ENCODE measurements at regions of chr12 and their contacts with region 1.

Region 1: GRCh38 chr12:6914246-6914946 is at the start of gene ENO2:
- DNase-seq: peak; percentile 92 to 95
- ATAC-seq: peak; percentile 94
- H3K4me3 ChIP-seq: peak within 1 kb of the TSS; percentile 61 to 89
- H3K27ac ChIP-seq: peak within 1 kb of the TSS; percentile 31 to 86
- H3K4me1 ChIP-seq: no peaks in the 10 kb centered on the region
- H3K27me3 ChIP-seq: no peaks in the 10 kb centered on the region
- total RNA-seq, gene ENO2: 59.0 to 79.5 TPM

Region 2: GRCh38 chr12:6873094-6874014 is 41.0 kb before region 1 on chr12 and contains the start of gene SPSB2:
- intact Hi-C with region 1: loop called in 1 of 2 experiments (anchors 2 kb)
- DNase-seq: peak; percentile 100
- ATAC-seq: peak; percentile 98
- H3K4me3 ChIP-seq: peak within 1 kb of the TSS; percentile 71 to 80
- H3K27ac ChIP-seq: peak within 1 kb of the TSS in 1 of 2 donors; percentile 71
- H3K4me1 ChIP-seq: peaks cover 0 to 1% of the 10 kb centered on the region in 2 donors
- H3K27me3 ChIP-seq: no peaks in the 10 kb centered on the region
- total RNA-seq, gene SPSB2: 4.2 to 10.2 TPM

Region 3: DNA sequence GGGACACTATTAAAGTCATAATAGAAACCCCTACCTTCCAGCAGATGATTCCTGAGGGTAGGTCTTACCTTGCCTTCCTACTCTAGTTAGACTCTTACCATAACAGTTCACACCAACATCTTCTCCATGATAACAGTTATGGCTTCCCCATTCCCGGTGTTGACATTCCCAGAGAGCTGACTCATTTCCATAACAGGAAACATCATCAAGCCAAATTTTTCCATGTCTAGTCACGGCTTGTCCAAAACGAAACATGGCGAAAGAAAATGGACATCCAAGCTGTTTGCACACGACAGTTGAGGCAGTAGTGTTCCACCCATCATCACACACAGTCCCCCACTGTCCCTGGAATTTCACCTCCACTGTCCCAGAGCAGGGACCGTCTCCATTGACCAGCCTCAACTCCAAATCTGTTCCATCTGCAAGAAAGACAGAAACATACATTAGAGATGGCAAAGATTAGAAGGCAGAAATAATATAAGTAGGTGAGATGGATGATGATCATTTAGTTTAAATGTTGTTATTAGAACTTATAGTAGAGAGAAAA is 519.0 kb after region 1 on chr12:
- intact Hi-C with region 1: no loop called
- DNase-seq: no peak
- ATAC-seq: no peak
- H3K4me3 ChIP-seq: no peak overlapping the region
- H3K27ac ChIP-seq: no peak overlapping the region
- H3K4me1 ChIP-seq: no peaks in the 10 kb centered on the region
- H3K27me3 ChIP-seq: no peaks in the 10 kb centered on the region

Measured in aorta (tissue), 5 donors.